Activated CD8-positive, alpha-beta T cell treated with anti-CD3 and anti-CD28 coated beads for 36 hours (primary cell): ENCODE measurements at regions of chr7 and their contacts with region 1.

Region 1: DNA sequence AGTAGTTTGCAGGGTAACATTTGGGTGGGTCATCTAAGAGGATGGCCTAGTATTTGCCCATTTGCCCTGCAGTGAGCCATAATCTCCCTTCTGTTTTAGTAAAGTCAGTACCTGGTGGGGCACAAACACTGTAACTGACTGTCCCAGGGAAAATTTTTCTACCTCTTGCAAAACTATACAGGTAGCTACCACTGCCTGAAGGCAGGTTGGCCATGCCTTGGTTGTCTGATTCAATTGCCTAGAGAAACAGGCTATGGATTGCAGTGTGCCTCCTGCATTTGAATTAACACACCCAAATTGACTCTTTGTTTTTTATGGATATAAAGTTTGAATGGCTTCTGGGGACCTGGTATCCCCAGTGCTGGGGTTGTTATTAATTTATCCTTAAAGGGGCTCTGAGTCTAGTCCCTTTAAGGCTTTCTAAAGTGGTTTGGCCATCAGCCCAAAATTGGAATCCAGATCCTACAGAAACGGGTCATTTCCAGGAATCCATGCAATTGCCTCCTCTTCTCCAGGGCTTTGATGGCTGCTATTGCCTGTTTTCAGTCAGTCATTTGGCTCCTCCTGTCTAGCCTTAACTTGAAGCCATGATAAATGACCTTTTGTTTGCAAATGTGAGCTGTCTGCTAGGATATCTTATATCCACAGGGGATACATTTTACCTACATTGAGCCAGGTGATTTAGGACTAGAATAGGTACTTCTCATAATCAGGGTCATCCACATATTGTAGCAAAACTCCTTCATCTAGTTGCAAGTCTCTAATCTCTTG is 89.1 kb downstream of the STRA8 start:
- DNase-seq: no peak
- ATAC-seq: no peak
- H3K4me3 Mint-ChIP-seq: no peak overlapping the region
- H3K27ac Mint-ChIP-seq: no peak overlapping the region
- H3K4me1 Mint-ChIP-seq: no peaks in the 10 kb centered on the region
- H3K27me3 Mint-ChIP-seq: no peaks in the 10 kb centered on the region
- CTCF ChIP-seq: no peak

Region 2: GRCh38 chr7:135355377-135356042 is 32.8 kb after region 1 on chr7:
- CTCF ChIA-PET with region 1: no interaction called
- POLR2A ChIA-PET with region 1: no interaction called
- intact Hi-C with region 1: loop called (anchors 2 kb)
- DNase-seq: no peak
- ATAC-seq: no peak
- H3K4me3 Mint-ChIP-seq: no peak overlapping the region
- H3K27ac Mint-ChIP-seq: no peak overlapping the region
- H3K4me1 Mint-ChIP-seq: no peaks in the 10 kb centered on the region
- H3K27me3 Mint-ChIP-seq: no peaks in the 10 kb centered on the region
- CTCF ChIP-seq: no peak